ENCODE measurements at regions of chr1 and their contacts with region 1.

Region 1: DNA sequence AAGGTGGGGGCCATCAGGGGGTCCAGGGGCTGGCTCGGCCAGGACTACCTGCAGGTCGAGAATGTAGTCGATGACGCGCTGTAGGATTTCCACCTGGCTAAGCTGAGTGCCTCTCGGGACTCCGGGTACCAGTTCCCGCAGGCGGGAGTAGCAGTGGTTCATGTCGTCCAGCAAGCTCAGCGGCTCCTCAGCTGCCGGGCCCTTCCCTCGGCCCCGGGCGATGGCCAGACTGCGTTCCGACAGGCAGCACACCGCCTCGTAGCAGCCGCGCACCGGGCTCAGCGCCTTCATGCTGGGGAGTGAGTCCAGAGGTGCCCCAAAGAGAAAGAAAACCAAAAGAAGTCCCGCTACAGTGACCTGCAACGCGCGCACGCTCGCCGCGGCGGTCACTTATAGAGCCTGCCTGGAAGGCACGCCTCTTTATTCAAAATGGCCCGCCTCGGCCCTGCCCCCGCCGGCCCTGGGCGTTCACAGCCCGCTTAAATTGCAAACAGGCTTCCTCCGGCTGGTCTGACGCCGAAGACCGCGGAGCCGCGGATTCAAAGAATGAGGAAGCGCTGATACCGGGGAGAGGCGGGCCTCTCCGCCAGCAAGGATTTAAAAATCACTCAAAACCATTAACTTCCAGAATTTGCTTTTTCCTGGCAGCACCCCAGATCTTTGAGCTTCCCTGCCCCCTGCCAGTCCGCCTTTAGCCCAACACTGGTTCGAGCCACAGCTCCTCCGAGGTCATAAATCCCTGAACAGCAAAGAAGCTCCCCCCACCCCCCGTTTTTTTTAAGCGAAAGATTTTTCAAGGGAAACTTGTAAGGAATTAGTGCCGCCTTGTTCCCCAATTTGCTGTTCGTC is at the start of gene ID3:
- DNase-seq: peak; percentile 85 to 93 (median 89)
- H3K4me3 ChIP-seq: peak within 1 kb of the TSS; percentile 82 to 85
- H3K4me3 Mint-ChIP-seq: peak within 1 kb of the TSS; percentile 87 to 97 (median 96)
- H3K27ac ChIP-seq: peak within 1 kb of the TSS; percentile 66
- H3K27ac Mint-ChIP-seq: peak within 1 kb of the TSS; percentile 84 to 97 (median 94)
- H3K4me1 ChIP-seq: peaks cover 52% of the 10 kb centered on the region
- H3K4me1 Mint-ChIP-seq: peaks cover 30 to 84% (median 56%) of the 10 kb centered on the region in 4 donors
- H3K27me3 ChIP-seq: no peaks in the 10 kb centered on the region
- H3K27me3 Mint-ChIP-seq: no peaks in the 10 kb centered on the region
- total RNA-seq, gene ID3: 89.6 to 98.0 TPM

Region 2: DNA sequence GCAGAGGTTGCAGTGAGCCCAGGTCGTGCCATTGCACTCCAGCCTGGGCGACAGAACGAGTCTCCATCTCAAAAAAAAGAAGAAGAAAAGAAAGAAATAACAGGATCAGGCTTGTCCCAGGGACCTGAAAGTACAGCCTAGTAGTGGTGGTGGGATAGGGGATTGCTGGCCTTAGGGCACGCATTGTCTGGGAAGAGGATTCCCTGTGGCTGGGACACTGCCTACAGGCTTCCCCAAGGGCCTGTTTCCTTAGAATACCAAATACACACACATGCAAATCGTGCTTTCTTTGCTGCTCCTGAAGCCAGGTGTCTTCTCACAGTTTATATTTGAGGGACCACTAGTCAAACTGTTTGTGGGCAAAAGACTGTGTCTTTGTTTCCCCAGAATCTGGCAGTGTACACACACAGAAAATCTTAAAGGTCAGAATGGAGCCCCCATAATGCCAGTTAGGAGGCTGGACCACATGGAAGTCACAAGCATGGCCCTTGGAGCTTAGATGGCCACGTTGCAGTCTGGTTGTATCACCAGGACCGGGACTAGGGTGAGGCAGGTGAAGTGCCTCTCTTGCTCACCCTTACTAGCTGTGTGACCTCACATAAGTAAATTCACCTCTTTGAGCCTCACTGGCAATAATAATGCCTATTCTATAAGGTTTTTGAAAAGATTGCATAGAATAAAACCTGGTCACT is 62.7 kb before region 1 on chr1:
- CTCF ChIA-PET with region 1: interaction called, 15 read pairs
- POLR2A ChIA-PET with region 1: interaction called, 5 read pairs
- intact Hi-C with region 1: no loop called
- DNase-seq: no peak
- H3K4me3 ChIP-seq: no peak overlapping the region
- H3K4me3 Mint-ChIP-seq: no peak overlapping the region
- H3K27ac ChIP-seq: no peak overlapping the region
- H3K27ac Mint-ChIP-seq: no peak overlapping the region
- H3K4me1 ChIP-seq: peaks cover 4% of the 10 kb centered on the region
- H3K4me1 Mint-ChIP-seq: peaks cover 0 to 9% (median 5%) of the 10 kb centered on the region in 4 donors
- H3K27me3 ChIP-seq: no peaks in the 10 kb centered on the region
- H3K27me3 Mint-ChIP-seq: no peaks in the 10 kb centered on the region

Region 3: DNA sequence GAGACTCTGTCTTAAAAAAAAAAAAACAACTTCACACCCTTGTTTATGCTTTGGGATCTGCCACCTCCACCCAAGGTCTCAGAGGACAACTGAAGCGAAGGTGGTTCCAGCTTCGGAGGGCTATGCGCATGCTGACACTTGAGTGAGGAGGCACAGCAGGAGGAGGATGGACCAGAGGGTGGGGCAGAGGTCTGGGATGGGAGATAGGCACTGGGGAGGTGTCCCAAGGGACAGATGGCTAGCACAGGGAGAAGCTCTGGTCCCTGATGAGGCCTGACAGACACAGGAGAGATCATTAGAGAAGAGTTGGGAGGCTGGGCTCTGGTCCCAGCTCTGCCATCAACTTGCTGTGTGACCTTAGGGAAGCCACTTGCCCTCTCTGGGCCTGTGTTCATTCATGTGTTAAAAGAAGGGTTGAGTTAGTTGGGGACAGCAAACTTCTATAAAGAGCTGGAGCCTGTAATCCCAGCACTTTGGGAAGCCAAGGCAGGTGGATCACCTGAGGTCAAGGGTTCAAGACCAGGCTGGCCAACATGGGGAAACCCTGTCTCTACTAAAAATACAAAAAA is 45.2 kb before region 1 on chr1:
- CTCF ChIA-PET with region 1: no interaction called
- POLR2A ChIA-PET with region 1: no interaction called
- intact Hi-C with region 1: no loop called
- DNase-seq: no peak
- H3K4me3 ChIP-seq: no peak overlapping the region
- H3K4me3 Mint-ChIP-seq: no peak overlapping the region
- H3K27ac ChIP-seq: no peak overlapping the region
- H3K27ac Mint-ChIP-seq: peak overlapping the region in 3 of 7 donors; percentile 31 to 76 (median 46)
- H3K4me1 ChIP-seq: no peaks in the 10 kb centered on the region
- H3K4me1 Mint-ChIP-seq: peaks cover 0 to 5% (median 2%) of the 10 kb centered on the region in 4 donors
- H3K27me3 ChIP-seq: no peaks in the 10 kb centered on the region
- H3K27me3 Mint-ChIP-seq: no peaks in the 10 kb centered on the region

Region 4: DNA sequence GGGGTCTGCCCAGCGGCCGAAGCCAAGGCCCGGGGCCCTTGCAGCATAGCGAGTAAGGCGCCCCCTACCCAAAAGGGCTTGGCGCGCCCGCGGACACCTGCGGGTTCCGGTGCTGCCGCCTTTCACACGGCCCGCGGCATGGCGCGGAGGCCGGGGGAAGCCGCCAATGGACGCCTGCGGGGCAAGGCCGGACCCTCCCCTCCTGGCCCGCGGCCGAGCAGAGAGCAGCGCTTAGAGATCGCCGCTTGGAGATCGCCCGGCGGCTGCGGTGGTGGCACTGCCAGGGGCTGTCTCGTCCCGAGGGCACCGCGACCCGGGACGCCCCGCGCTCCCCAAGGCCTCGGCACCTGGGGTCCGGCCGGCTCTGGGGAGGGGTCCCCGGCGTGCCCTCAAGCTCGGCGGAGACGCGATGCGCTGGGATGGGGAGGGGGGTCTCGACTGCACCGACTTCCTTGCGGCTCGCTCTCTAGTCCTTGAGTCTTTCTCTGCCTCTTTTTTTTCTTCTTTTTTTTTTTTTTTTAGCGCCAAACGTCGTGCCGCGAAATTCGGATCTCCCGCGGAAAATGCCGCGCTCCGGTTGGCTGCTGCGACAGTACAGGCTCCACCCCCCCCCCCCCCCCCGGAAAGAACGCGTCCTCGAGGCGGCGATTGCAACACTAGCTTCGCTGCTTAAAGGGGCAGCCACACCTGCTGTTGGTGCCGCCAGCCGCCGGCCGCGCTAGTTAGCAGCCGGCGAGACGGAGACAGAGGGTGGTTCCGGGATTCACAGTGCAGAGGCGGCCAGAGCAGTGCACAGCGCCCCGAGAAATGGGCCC is 28.4 kb before region 1 on chr1 and contains the start of gene E2F2:
- CTCF ChIA-PET with region 1: interaction called, 8 read pairs
- POLR2A ChIA-PET with region 1: interaction called, 32 read pairs
- intact Hi-C with region 1: loop called (anchors 2 kb)
- DNase-seq: peak; percentile 78 to 86 (median 82)
- H3K4me3 ChIP-seq: peak within 1 kb of the TSS; percentile 40 to 64
- H3K4me3 Mint-ChIP-seq: peak within 1 kb of the TSS; percentile 90 to 96 (median 92)
- H3K27ac ChIP-seq: peak within 1 kb of the TSS; percentile 60
- H3K27ac Mint-ChIP-seq: peak within 1 kb of the TSS; percentile 86 to 97 (median 94)
- H3K4me1 ChIP-seq: peaks cover 82% of the 10 kb centered on the region
- H3K4me1 Mint-ChIP-seq: peaks cover 58 to 90% (median 80%) of the 10 kb centered on the region in 4 donors
- H3K27me3 ChIP-seq: no peaks in the 10 kb centered on the region
- H3K27me3 Mint-ChIP-seq: no peaks in the 10 kb centered on the region
- total RNA-seq, gene E2F2: 1.1 to 1.2 TPM

Region 5: DNA sequence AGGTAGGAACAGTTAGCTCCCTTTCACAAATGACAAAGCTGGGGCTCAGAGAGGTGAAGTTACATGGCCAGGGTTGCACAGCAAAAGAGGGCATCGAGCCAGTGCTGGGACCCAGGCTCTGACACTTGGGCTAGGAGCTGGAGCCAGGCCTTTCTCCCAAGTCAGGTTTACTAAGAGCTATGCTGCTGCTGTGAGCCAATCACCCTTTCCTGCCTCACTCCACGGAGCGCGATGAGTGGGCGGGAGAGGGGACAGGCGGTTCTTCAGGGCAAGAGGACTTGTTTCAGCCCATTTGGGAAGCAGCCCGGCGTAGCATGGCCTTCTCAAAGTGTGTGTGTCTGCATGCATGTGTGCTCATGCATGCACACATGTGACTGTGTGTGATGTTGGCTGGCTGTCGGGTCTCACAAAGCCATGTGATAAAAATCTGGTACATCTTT is 10.6 kb before region 1 on chr1:
- CTCF ChIA-PET with region 1: interaction called, 39 read pairs
- POLR2A ChIA-PET with region 1: interaction called, 33 read pairs
- intact Hi-C with region 1: no loop called
- DNase-seq: no peak
- H3K4me3 ChIP-seq: no peak overlapping the region
- H3K4me3 Mint-ChIP-seq: no peak overlapping the region
- H3K27ac ChIP-seq: no peak overlapping the region
- H3K27ac Mint-ChIP-seq: peak overlapping the region in 2 of 7 donors; percentile 41 to 42
- H3K4me1 ChIP-seq: peaks cover 15% of the 10 kb centered on the region
- H3K4me1 Mint-ChIP-seq: peaks cover 6 to 22% (median 11%) of the 10 kb centered on the region in 4 donors
- H3K27me3 ChIP-seq: no peaks in the 10 kb centered on the region
- H3K27me3 Mint-ChIP-seq: no peaks in the 10 kb centered on the region

Region 6: DNA sequence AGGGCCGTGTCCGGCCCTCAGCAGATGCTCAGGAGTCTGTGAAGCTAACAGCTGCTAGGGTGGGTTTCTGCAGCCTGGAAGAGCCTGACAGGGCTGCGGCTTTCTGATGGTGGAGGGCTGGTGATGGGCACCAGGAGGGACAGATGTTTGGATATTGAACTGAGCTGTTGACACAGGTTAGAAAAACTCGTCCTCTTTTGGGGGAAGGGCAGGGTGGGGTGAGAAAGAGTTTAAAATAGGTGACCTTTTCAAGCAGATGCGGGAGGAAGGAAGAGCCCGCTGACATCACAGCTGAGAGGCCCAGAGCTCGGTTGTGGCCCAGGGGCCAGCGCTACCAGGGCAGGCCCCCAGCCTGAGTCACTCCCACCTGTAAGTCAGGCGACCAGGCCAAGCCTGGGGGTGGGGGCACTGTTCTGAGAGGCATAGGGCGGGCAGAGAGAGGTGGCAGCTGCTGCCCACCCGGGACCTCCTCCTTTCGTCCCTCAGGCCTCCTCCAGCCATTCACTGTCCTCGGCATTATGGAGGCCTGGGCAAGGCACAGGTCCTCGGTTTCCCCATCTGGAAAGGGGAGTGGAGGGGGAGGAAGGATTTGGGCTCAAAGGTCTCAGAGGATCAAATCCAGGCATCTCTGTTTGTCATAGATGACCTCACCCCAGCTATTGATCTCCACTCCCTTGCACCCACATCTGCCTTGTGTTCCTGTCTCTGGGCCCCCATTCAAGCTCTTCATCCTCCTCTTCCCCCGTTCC is 32.3 kb after region 1 on chr1:
- CTCF ChIA-PET with region 1: interaction called, 16 read pairs
- POLR2A ChIA-PET with region 1: interaction called, 263 read pairs
- intact Hi-C with region 1: no loop called
- DNase-seq: no peak
- H3K4me3 ChIP-seq: no peak overlapping the region
- H3K4me3 Mint-ChIP-seq: peak overlapping the region in 6 of 8 donors; percentile 25 to 75 (median 64)
- H3K27ac ChIP-seq: no peak overlapping the region
- H3K27ac Mint-ChIP-seq: peak overlapping the region in 6 of 7 donors; percentile 82 to 90 (median 88)
- H3K4me1 ChIP-seq: peaks cover 54% of the 10 kb centered on the region
- H3K4me1 Mint-ChIP-seq: peaks cover 25 to 71% (median 52%) of the 10 kb centered on the region in 4 donors
- H3K27me3 ChIP-seq: no peaks in the 10 kb centered on the region
- H3K27me3 Mint-ChIP-seq: no peaks in the 10 kb centered on the region

Region 7: GRCh38 chr1:23613191-23614031 is 54.1 kb after region 1 on chr1:
- CTCF ChIA-PET with region 1: interaction called, 77 read pairs
- POLR2A ChIA-PET with region 1: interaction called, 430 read pairs
- intact Hi-C with region 1: no loop called
- DNase-seq: peak; percentile 44 to 67 (median 62)
- H3K4me3 ChIP-seq: peak overlapping the region in 1 of 2 donors; percentile 23
- H3K4me3 Mint-ChIP-seq: peak overlapping the region; percentile 60 to 79 (median 71)
- H3K27ac ChIP-seq: peak overlapping the region; percentile 62
- H3K27ac Mint-ChIP-seq: peak overlapping the region; percentile 83 to 94 (median 92)
- H3K4me1 ChIP-seq: peaks cover 83% of the 10 kb centered on the region
- H3K4me1 Mint-ChIP-seq: peaks cover 57 to 88% (median 75%) of the 10 kb centered on the region in 4 donors
- H3K27me3 ChIP-seq: no peaks in the 10 kb centered on the region
- H3K27me3 Mint-ChIP-seq: no peaks in the 10 kb centered on the region

Region 8: GRCh38 chr1:23634842-23635651 is 75.7 kb after region 1 on chr1:
- CTCF ChIA-PET with region 1: interaction called, 1,081 read pairs
- POLR2A ChIA-PET with region 1: interaction called, 616 read pairs
- intact Hi-C with region 1: loop called (anchors 1 kb)
- DNase-seq: peak; percentile 70 to 79 (median 76)
- H3K4me3 ChIP-seq: peak overlapping the region; percentile 36 to 44
- H3K4me3 Mint-ChIP-seq: peak overlapping the region; percentile 72 to 84 (median 78)
- H3K27ac ChIP-seq: peak overlapping the region; percentile 48
- H3K27ac Mint-ChIP-seq: peak overlapping the region; percentile 71 to 97 (median 90)
- H3K4me1 ChIP-seq: peaks cover 19% of the 10 kb centered on the region
- H3K4me1 Mint-ChIP-seq: peaks cover 21 to 41% (median 26%) of the 10 kb centered on the region in 4 donors
- H3K27me3 ChIP-seq: no peaks in the 10 kb centered on the region
- H3K27me3 Mint-ChIP-seq: no peaks in the 10 kb centered on the region

Region 9: GRCh38 chr1:24341260-24341659 is 781.9 kb after region 1 on chr1:
- CTCF ChIA-PET with region 1: no interaction called
- POLR2A ChIA-PET with region 1: no interaction called
- intact Hi-C with region 1: no loop called
- DNase-seq: no peak
- H3K4me3 ChIP-seq: no peak overlapping the region
- H3K4me3 Mint-ChIP-seq: no peak overlapping the region
- H3K27ac ChIP-seq: no peak overlapping the region
- H3K27ac Mint-ChIP-seq: no peak overlapping the region
- H3K4me1 ChIP-seq: no peaks in the 10 kb centered on the region
- H3K4me1 Mint-ChIP-seq: no peaks in the 10 kb centered on the region
- H3K27me3 ChIP-seq: peaks cover 4% of the 10 kb centered on the region
- H3K27me3 Mint-ChIP-seq: peaks cover 1 to 3% of the 10 kb centered on the region in 2 donors